GM13977 (cell line): ENCODE measurements at regions of chr14 and their contacts with region 1.

Region 1: DNA sequence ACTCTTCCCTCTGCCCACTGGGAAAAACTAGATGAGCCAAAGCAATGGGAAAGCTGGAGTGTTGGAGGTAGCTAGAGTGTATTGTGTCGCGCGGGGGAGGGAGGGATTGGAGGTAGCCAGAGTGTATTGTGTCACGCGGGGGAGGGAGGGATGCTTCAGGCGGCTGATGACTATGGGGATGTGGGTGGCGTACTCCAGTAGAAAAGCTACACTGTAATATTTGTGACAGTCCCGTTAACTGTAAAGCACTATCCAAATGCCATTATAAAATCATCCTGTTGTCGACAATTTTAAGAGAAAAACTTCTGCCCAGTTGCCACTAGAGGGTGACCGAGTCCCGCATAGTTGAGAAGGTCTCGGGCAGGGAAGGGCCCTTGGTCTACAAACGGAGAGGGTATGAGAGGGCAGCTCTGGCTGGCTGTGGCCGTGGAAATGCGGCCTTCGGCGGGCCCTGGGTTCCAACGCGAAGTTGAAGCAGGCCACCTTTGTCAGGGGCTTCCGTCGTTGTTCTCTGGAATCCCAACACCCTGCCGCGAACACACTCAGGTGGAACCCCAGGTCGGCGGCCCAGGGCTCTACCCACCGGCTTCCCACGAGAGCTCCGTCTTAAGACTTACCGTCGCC is 15.1 kb upstream of the PLEK2 start:
- DNase-seq: peak; percentile 85
- CTCF ChIP-seq: peak; percentile 85

Region 2: DNA sequence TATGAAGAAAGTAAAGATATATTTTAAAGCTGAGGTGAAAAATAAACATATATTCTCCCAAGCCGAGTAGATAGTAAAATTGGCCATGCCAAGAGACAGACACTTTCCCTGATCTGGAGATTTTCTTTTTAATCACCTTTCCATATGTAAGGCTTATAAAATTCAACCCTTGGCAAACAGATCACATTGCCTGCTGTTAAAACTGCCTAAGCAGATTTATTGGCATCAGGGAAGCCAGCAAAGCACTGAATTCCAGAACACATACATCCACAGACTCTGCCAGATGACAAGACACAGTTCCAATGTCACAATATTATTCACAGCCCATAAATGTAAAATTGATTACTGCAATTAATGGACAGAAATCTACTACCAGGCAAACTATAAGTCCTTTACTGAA is 316.1 kb before region 1 on chr14:
- in situ Hi-C with region 1: no loop called
- DNase-seq: no peak
- CTCF ChIP-seq: no peak

Region 3: DNA sequence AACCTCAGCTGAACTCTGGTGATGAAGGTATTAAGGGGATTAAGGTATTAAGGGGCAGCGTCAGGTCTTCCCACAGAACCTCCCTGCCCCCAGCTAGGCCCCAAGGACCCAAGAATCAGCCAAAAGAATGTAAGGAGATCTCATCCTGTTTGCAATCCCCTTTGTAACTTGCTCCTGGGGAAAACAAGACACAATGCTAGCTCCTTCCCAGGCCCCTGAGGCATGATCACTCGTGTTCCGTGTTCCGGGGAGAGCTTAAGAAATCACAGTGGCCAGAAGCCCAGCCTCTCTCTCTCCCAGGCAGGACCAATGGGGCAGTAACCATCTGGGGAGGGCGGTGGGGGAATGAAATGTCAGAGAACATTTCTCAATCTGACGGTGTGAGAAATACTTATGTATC is 139.8 kb after region 1 on chr14:
- in situ Hi-C with region 1: loop called (anchors 10 kb)
- DNase-seq: no peak
- CTCF ChIP-seq: no peak